ENCODE measurements at regions of chr5 and their contacts with region 1.

Region 1: DNA sequence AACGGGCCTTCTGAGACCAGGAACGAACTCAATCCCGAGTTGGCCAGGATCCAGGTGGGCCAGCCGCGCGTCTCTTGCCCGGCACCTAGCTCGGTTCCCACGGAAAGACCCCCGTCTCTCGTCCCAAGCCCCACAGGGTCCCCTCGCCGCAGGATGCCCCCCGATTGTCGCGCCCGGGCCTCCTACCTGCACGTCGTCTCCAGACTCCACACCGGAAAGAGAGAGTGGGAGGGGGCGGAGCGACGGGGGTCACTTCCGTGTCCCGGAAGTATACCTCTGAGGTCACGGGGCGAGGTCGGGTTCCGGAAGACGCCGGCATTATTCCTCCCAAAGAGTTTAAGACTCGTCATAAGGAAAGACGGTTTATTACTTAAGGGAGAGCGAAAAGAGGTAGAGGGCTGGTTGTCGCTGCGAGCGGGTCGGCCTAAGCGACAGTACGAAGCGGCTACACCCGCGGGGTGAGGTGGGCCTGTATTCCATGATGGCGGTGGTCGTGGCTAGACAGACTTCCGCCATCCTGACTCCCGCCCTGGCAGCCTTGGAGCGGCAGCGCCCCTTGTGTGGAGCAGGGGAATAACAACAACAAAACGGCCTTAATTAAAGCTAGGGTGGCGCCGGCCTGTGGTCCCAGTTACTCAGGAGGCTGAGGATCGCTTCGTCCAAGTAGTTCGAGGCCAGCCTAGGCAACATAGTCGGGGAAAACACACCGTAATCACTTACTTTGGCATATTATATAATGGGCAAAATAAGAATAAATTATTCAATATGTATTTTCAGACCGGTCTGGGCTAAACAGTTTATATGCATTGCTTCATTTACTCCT is at the start of gene RPS14:
- DNase-seq: peak; percentile 93 to 96 (median 94)
- ATAC-seq: peak; percentile 94
- H3K4me3 ChIP-seq: peak within 1 kb of the TSS; percentile 87
- H3K27ac ChIP-seq: peak within 1 kb of the TSS; percentile 100
- H3K4me1 ChIP-seq: peaks cover 8 to 11% of the 10 kb centered on the region in 2 experiments; a peak in 4 of 5 replicates
- H3K27me3 ChIP-seq: no peaks in the 10 kb centered on the region
- CTCF ChIP-seq: peak; percentile 92
- EP300 ChIP-seq: 0 out of 2 replicates have a peak, but pooled peaks have one; percentile 20
- POLR2A ChIP-seq: peak; percentile 99
- RAD21 ChIP-seq: peak; percentile 11 to 15; a peak in 2 of 4 replicates
- polyA plus RNA-seq, gene RPS14: 1,824 to 2,512 TPM

Region 2: DNA sequence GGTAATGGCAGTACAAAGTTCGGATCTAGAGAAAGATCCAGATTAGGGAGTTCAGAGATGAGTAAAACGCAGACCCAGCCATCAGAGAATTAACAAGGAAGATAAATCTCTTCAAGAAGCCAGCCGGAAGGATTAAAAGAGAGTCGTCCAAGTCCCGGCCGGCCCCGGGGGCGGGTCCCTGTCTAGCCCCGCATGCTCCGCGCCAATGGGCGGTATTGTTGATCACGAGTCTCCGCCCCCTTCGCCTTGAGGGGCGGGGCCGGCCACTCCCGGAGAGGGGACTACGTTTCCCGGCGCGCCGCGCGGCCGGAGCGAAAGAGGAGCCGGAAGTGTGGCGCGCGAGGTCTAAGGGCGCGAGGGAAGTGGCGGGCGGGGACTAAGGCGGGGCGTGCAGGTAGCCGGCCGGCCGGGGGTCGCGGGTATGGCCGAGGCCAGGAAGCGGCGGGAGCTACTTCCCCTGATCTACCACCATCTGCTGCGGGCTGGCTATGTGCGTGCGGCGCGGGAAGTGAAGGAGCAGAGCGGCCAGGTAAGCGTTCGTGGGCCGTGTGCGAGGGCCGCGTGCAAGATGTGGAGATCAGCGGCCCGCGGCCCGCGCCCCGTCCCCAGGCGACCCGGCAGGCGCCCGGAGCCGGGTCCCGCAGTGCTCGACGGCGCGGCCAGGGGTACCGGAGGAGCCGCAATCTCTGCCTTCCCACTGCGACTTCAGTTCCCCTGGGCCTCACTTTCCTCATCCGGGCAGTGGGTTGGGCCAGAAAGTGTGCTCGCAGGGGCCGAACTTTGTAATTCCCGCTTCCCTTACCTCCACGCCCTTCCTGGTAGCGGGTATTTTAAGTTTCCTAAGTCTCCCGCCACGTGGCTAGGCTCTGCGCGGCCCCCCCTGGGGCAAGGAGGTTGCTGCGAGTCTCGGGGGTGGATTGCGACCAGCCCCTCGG is 92.1 kb before region 1 on chr5 and contains the start of gene TCOF1:
- CTCF ChIA-PET with region 1: no interaction called
- POLR2A ChIA-PET with region 1: no interaction called
- in situ Hi-C with region 1: no loop called
- intact Hi-C with region 1: no loop called
- DNase-seq: peak; percentile 97 to 98 (median 98)
- ATAC-seq: peak; percentile 99
- H3K4me3 ChIP-seq: peak within 1 kb of the TSS; percentile 74
- H3K27ac ChIP-seq: peak within 1 kb of the TSS; percentile 74
- H3K4me1 ChIP-seq: peaks cover 13 to 14% of the 10 kb centered on the region in 2 experiments; a peak in 4 of 5 replicates
- H3K27me3 ChIP-seq: peaks cover 6% of the 10 kb centered on the region in 2 experiments; a peak in 3 of 5 replicates
- CTCF ChIP-seq: no peak
- EP300 ChIP-seq: no peak
- POLR2A ChIP-seq: peak; percentile 84
- RAD21 ChIP-seq: no peak
- polyA plus RNA-seq, gene TCOF1: 9.8 to 17.3 TPM

Region 3: DNA sequence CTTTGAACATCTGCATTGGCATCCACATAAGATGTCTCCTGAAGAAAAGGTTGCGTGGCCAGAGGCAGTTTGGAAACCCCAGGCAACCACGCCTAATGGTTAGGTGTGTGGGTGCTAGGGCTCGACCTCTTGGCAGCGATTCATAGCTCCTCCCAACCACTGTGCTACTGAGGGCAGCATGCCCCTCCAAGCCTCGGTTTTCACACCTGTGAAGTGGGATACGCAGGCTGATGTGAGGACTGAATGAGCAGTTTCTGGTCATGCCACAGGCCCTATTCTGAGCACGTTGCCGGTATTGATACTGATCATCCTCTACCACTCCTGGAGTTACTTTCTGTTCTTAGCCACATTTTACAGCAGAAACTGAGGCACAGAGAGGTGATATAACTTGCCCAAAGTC is 77.3 kb after region 1 on chr5:
- CTCF ChIA-PET with region 1: no interaction called
- POLR2A ChIA-PET with region 1: no interaction called
- in situ Hi-C with region 1: no loop called
- intact Hi-C with region 1: no loop called
- DNase-seq: no peak
- ATAC-seq: no peak
- H3K4me3 ChIP-seq: no peak overlapping the region
- H3K27ac ChIP-seq: no peak overlapping the region
- H3K4me1 ChIP-seq: peaks cover 3 to 12% of the 10 kb centered on the region in 2 experiments; a peak in 2 of 5 replicates
- H3K27me3 ChIP-seq: no peaks in the 10 kb centered on the region
- CTCF ChIP-seq: no peak
- EP300 ChIP-seq: no peak
- POLR2A ChIP-seq: no peak
- RAD21 ChIP-seq: no peak

Region 4: DNA sequence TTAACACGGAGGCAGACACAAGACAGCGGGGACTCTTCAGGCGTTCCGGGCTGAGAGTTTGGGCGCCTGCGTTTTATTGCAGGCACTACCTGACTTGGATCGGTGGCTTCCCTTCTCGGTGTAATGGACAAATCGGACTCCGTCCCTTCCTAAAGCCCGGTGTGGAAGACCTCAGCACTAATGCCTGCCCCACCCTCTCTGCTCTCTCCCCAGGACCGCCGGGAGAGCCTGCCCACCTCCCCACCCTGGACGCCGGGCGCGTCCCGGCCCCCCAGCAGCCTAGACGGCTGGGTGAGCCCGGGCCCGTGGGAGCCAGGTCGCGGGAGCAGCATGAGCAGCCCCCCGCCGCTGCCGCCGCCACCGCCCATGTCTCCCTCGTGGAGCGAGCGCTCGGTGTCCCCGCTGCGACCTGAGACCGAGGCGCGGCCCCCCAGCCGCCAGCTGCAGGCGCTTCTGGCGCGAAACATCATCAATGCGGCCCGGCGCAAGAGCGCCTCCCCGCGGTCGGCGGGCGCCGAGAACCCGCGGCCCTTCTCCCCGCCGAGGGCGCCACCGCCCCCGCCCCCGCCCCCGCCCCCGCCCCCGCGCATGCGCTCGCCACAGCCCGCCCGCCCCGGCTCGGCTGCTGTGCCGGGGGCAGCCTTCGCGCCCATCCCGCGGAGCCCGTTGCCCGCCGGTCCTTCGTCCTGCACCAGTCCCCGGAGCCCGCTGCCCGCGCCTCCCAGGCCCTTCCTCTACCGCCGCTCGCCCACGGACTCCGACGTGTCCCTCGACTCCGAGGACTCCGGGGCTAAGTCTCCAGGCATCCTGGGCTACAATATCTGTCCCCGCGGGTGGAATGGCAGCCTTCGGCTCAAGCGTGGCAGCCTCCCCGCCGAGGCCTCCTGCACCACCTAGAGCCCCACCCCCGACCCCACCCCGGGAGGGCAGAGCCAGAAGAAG is 206.7 kb after region 1 on chr5:
- CTCF ChIA-PET with region 1: no interaction called
- POLR2A ChIA-PET with region 1: no interaction called
- in situ Hi-C with region 1: loop called (anchors 10 kb)
- intact Hi-C with region 1: no loop called
- DNase-seq: peak; percentile 88 to 99 (median 98)
- ATAC-seq: peak; percentile 91
- H3K4me3 ChIP-seq: peak overlapping the region; percentile 64
- H3K27ac ChIP-seq: 0 out of 3 replicates have a peak overlapping the region, but pooled peaks have one; percentile 19
- H3K4me1 ChIP-seq: peaks cover 9 to 13% of the 10 kb centered on the region in 2 experiments; a peak in 4 of 5 replicates
- H3K27me3 ChIP-seq: peaks cover 6 to 50% of the 10 kb centered on the region in 2 experiments
- CTCF ChIP-seq: peak; percentile 44 to 90 (median 77); a peak in 5 of 6 replicates
- EP300 ChIP-seq: no peak
- POLR2A ChIP-seq: peak; percentile 48; the same call in 1 of the 2 replicates
- RAD21 ChIP-seq: peak; percentile 70 to 79